ENCODE measurements at regions of chr4 and their contacts with region 1.

Region 1: GRCh38 chr4:153344131-153345010 is at the start of gene MND1:
- DNase-seq: peak; percentile 95
- H3K4me3 ChIP-seq: peak within 1 kb of the TSS; percentile 87
- H3K27ac ChIP-seq: peak within 1 kb of the TSS; percentile 100
- H3K4me1 ChIP-seq: peaks cover 80% of the 10 kb centered on the region
- CTCF ChIP-seq: peak; percentile 90
- total RNA-seq, gene MND1: 59.4 and 67.9 TPM in 2 replicates

Region 2: DNA sequence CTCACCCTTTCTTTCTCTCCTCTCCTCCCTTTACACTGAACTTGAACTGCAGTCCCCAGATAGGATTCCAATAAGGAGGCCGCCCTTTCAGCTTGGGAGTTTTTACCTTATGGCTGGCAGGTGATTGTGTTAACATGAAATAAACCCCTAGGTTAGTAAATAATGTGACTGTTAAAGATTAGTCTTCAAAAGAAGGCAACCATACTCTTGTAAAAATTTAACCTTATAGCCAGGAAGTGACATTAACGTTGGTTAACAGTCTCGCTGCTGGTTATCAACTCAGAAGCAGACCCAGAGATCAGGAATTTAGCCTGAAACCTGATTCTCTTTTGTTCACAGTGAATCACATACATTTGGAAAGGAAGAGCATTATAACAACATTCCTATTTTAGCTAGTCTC is 393.0 kb before region 1 on chr4:
- CTCF ChIA-PET with region 1: no interaction called
- POLR2A ChIA-PET with region 1: no interaction called
- intact Hi-C with region 1: no loop called
- DNase-seq: no peak
- H3K4me3 ChIP-seq: no peak overlapping the region
- H3K27ac ChIP-seq: no peak overlapping the region
- H3K4me1 ChIP-seq: no peaks in the 10 kb centered on the region
- CTCF ChIP-seq: no peak

Region 3: DNA sequence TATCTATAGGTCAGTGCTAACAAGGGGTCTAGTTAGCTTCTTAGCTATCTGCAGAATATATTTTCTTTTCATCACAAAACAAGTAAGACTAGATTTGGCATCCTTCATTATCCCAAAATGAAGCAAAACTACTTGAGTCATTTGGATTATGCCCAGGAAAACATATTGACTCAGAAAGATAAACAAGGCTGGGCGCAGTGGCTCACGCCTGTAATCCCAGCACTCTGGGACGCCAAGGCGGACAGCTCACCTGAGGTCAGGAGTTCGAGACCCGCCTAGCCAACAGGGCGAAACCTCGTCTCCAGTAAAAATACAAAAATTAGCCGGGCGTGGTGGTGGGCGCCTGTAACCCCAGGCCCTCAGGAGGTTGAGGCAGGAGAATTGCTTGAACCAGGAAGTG is 17.9 kb before region 1 on chr4:
- CTCF ChIA-PET with region 1: interaction called, 3 read pairs
- POLR2A ChIA-PET with region 1: interaction called, 16 read pairs
- intact Hi-C with region 1: no loop called
- DNase-seq: no peak
- H3K4me3 ChIP-seq: no peak overlapping the region
- H3K27ac ChIP-seq: no peak overlapping the region
- H3K4me1 ChIP-seq: peaks cover 23% of the 10 kb centered on the region
- CTCF ChIP-seq: no peak

Region 4: GRCh38 chr4:153426207-153426885 is 82.0 kb after region 1 on chr4:
- CTCF ChIA-PET with region 1: interaction called, 3 read pairs
- POLR2A ChIA-PET with region 1: interaction called, 168 read pairs
- intact Hi-C with region 1: loop called (anchors 1 kb)
- DNase-seq: peak; percentile 90
- H3K4me3 ChIP-seq: peak overlapping the region; percentile 37
- H3K27ac ChIP-seq: peak overlapping the region; percentile 94
- H3K4me1 ChIP-seq: peaks cover 75% of the 10 kb centered on the region
- CTCF ChIP-seq: no peak

Region 5: DNA sequence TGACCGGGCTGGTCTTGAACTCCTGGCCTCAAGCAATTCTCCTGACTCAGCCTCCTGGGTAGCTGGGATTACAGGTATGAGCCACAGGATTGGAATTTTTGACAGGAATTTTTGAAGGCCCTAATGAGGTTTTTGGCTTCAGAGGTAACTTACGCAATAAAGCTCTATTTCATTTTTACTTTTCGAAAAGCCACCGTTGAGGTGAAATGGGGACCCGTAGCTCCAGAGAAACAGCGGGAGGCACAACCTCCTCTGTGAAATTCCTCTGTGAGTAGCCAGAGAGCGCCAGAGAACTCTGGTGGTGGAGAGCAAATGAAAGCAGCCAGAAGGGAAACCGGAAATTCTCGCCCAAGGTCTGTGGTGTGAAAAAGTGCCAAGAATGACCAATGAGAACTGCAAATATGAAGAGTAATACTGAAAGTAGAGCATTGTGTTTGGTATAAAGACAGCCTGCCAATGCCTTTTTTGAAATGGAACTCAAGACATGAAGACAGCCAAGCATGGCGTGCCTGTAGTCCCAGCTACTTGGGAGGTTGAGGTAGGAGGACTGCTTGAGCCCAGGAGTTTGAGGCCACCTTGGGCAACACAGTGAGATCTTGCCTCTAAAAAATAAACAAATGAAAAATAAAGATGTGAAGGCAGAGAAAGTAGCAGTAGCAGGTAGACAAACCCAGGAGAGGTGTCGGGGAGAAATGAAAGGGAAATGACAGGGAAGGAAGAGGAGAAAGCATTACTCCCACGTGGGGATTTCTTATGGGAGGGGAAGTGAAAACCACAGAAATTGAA is 88.8 kb after region 1 on chr4:
- CTCF ChIA-PET with region 1: interaction called, 4 read pairs
- POLR2A ChIA-PET with region 1: interaction called, 168 read pairs
- intact Hi-C with region 1: loop called (anchors 2 kb)
- DNase-seq: peak; percentile 94
- H3K4me3 ChIP-seq: peak overlapping the region; percentile 60
- H3K27ac ChIP-seq: peak overlapping the region; percentile 94
- H3K4me1 ChIP-seq: peaks cover 99% of the 10 kb centered on the region
- CTCF ChIP-seq: peak; percentile 96

Region 6: GRCh38 chr4:153438916-153439756 is 94.8 kb after region 1 on chr4:
- CTCF ChIA-PET with region 1: no interaction called
- POLR2A ChIA-PET with region 1: interaction called, 25 read pairs
- intact Hi-C with region 1: no loop called
- DNase-seq: peak; percentile 81
- H3K4me3 ChIP-seq: peak overlapping the region; percentile 67
- H3K27ac ChIP-seq: peak overlapping the region; percentile 94
- H3K4me1 ChIP-seq: peaks cover 94% of the 10 kb centered on the region
- CTCF ChIP-seq: peak; percentile 49

Region 7: GRCh38 chr4:153573881-153574802 is 229.8 kb after region 1 on chr4:
- CTCF ChIA-PET with region 1: interaction called, 4 read pairs
- POLR2A ChIA-PET with region 1: interaction called, 13 read pairs
- intact Hi-C with region 1: loop called (anchors 1 kb)
- DNase-seq: peak; percentile 83
- H3K4me3 ChIP-seq: peak overlapping the region; percentile 42
- H3K27ac ChIP-seq: peak overlapping the region; percentile 85
- H3K4me1 ChIP-seq: peaks cover 92% of the 10 kb centered on the region
- CTCF ChIP-seq: peak; percentile 85

Region 8: GRCh38 chr4:153750197-153750817 is 405.9 kb after region 1 on chr4:
- CTCF ChIA-PET with region 1: no interaction called
- POLR2A ChIA-PET with region 1: no interaction called
- intact Hi-C with region 1: loop called (anchors 5 kb)
- DNase-seq: peak; percentile 83
- H3K4me3 ChIP-seq: no peak overlapping the region
- H3K27ac ChIP-seq: no peak overlapping the region
- H3K4me1 ChIP-seq: no peaks in the 10 kb centered on the region
- CTCF ChIP-seq: peak; percentile 90